ENCODE measurements at regions of chr4 and their contacts with region 1.

Region 1: GRCh38 chr4:113756005-113756410 is 5.5 kb downstream of the CAMK2D start:
- DNase-seq: no peak
- ATAC-seq: no peak
- H3K4me3 ChIP-seq: no peak overlapping the region
- H3K4me3 Mint-ChIP-seq: peak overlapping the region in 5 of 10 donors; percentile 6 to 73 (median 10)
- H3K27ac ChIP-seq: no peak overlapping the region
- H3K27ac Mint-ChIP-seq: peak overlapping the region in 2 of 9 donors; percentile 41 to 52
- H3K4me1 ChIP-seq: peaks cover 5 to 12% of the 10 kb centered on the region in 2 donors
- H3K4me1 Mint-ChIP-seq: peaks cover 21 to 78% (median 57%) of the 10 kb centered on the region in 7 donors
- H3K27me3 ChIP-seq: no peaks in the 10 kb centered on the region
- H3K27me3 Mint-ChIP-seq: no peaks in the 10 kb centered on the region

Region 2: GRCh38 chr4:112343330-112344080 is 1412.5 kb before region 1 on chr4:
- CTCF ChIA-PET with region 1: no interaction called
- POLR2A ChIA-PET with region 1: no interaction called
- intact Hi-C with region 1: no loop called
- DNase-seq: no peak
- ATAC-seq: no peak
- H3K4me3 ChIP-seq: no peak overlapping the region
- H3K4me3 Mint-ChIP-seq: no peak overlapping the region
- H3K27ac ChIP-seq: no peak overlapping the region
- H3K27ac Mint-ChIP-seq: no peak overlapping the region
- H3K4me1 ChIP-seq: no peaks in the 10 kb centered on the region
- H3K4me1 Mint-ChIP-seq: peaks cover 0 to 9% (median 3%) of the 10 kb centered on the region in 7 donors
- H3K27me3 ChIP-seq: no peaks in the 10 kb centered on the region
- H3K27me3 Mint-ChIP-seq: no peaks in the 10 kb centered on the region

Region 3: DNA sequence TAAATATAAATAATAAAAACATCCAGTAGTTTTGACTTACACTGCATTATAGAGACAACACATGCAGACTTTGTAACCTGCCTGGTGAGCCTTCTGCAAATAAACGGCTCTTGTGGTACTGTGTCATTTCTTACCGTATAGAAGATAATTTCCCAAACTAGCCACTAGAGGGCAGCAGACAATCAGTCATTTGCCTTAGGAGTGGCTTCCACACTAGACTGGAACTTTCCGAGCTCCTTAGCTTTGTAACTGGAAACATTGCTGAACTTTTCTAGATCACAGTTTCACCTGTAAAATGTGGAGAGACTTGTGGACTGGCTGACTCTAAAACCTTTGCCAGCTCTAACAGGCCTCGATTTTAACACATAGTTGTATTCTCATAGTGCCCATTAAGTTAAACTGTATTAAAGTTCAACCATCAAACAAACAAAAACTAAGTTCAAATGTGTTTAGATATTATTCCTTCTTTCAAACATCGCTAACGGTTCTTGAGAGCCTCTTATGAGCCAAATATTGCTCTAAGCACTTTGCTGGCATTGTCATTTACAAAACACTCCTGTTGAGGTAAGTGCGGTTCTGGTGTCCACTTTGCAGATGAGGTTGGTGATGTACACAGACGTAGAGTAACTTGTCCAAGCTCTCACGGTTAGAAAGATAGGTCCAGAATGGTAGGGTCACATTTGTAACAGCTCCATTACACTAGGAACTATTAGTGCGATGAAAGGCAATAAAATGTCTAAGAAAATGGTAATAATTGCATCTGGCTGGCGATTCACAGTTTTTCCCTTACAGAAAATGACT is 361.1 kb before region 1 on chr4:
- CTCF ChIA-PET with region 1: no interaction called
- POLR2A ChIA-PET with region 1: no interaction called
- intact Hi-C with region 1: no loop called
- DNase-seq: peak in 8 of 9 donors; percentile 35 to 77 (median 66)
- ATAC-seq: peak; percentile 90
- H3K4me3 ChIP-seq: no peak overlapping the region
- H3K4me3 Mint-ChIP-seq: no peak overlapping the region
- H3K27ac ChIP-seq: no peak overlapping the region
- H3K27ac Mint-ChIP-seq: no peak overlapping the region
- H3K4me1 ChIP-seq: no peaks in the 10 kb centered on the region
- H3K4me1 Mint-ChIP-seq: peaks cover 0 to 2% (median 0%) of the 10 kb centered on the region in 7 donors
- H3K27me3 ChIP-seq: no peaks in the 10 kb centered on the region
- H3K27me3 Mint-ChIP-seq: peaks cover 0 to 7% (median 4%) of the 10 kb centered on the region in 5 donors

Region 4: GRCh38 chr4:113566015-113566795 is 189.8 kb before region 1 on chr4:
- CTCF ChIA-PET with region 1: no interaction called
- POLR2A ChIA-PET with region 1: no interaction called
- intact Hi-C with region 1: loop called in 1 of 2 experiments (anchors 5 kb)
- DNase-seq: no peak
- ATAC-seq: no peak
- H3K4me3 ChIP-seq: no peak overlapping the region
- H3K4me3 Mint-ChIP-seq: peak overlapping the region in 6 of 10 donors; percentile 3 to 31 (median 14)
- H3K27ac ChIP-seq: no peak overlapping the region
- H3K27ac Mint-ChIP-seq: peak overlapping the region in 6 of 9 donors; percentile 1 to 49 (median 15)
- H3K4me1 ChIP-seq: peaks cover 18 to 22% of the 10 kb centered on the region in 2 donors
- H3K4me1 Mint-ChIP-seq: peaks cover 29 to 66% (median 49%) of the 10 kb centered on the region in 7 donors
- H3K27me3 ChIP-seq: no peaks in the 10 kb centered on the region
- H3K27me3 Mint-ChIP-seq: no peaks in the 10 kb centered on the region

Region 5: GRCh38 chr4:113738251-113738650 is 17.8 kb before region 1 on chr4:
- CTCF ChIA-PET with region 1: interaction called, 4 read pairs
- POLR2A ChIA-PET with region 1: no interaction called
- intact Hi-C with region 1: loop called (anchors 1 to 2 kb)
- DNase-seq: no peak
- ATAC-seq: no peak
- H3K4me3 ChIP-seq: no peak overlapping the region
- H3K4me3 Mint-ChIP-seq: no peak overlapping the region
- H3K27ac ChIP-seq: no peak overlapping the region
- H3K27ac Mint-ChIP-seq: no peak overlapping the region
- H3K4me1 ChIP-seq: peaks cover 0 to 13% of the 10 kb centered on the region in 2 donors
- H3K4me1 Mint-ChIP-seq: peaks cover 21 to 80% (median 53%) of the 10 kb centered on the region in 7 donors
- H3K27me3 ChIP-seq: no peaks in the 10 kb centered on the region
- H3K27me3 Mint-ChIP-seq: no peaks in the 10 kb centered on the region

Measured in naive thymus-derived CD4-positive, alpha-beta T cell (primary cell).